Activated CD4-positive, alpha-beta T cell treated with anti-CD3 and anti-CD28 coated beads for 36 hours (primary cell): ENCODE measurements at regions of chr14 and their contacts with region 1.

Region 1: DNA sequence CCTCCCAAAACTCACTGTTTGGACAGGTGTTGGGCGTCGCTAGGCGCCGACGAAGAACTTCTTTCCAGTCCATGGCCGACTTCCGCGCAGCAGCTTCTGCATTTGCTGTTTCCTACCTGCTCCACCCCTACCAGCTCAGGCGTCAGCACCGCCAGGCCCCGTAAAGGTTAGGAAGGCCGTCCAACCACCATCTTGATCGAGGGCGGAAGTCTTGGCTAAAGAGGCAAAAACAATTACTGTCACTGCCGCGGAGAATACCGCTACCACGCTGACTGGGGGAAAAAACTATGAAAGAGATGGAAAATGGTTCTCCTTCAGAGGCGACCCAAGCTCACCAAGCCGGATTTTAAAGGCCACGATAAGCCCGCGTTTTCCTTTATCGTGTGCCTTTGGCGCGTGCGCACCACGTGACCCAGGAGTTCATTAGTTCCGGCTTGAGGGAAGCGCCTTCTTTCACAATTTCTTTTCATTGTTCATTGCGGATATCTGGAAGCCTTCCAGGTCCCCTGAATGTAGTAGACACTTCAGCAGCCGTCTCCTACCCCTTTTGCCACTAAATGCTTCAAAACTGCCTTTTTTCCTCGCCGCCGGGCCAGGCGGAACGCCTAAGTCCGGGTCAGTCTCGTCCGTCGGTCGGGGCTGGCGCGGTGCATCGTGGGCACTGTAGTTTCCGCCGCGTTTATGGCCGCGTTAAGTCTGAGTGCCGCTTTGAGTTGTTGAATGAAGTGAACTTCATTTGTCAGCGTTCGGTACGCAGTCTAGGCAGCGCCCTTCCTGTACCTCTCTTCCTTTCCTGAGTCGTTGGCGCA is at the starts of genes PPP2R3C and PRORP:
- DNase-seq: peak; percentile 93
- ATAC-seq: peak; percentile 87
- H3K4me3 Mint-ChIP-seq: peak within 1 kb of the TSS; percentile 87
- H3K27ac Mint-ChIP-seq: peak within 1 kb of the TSS; percentile 99
- H3K4me1 Mint-ChIP-seq: peaks cover 64% of the 10 kb centered on the region
- H3K27me3 Mint-ChIP-seq: no peaks in the 10 kb centered on the region
- total RNA-seq, gene PPP2R3C: 43.8 to 53.5 TPM
- total RNA-seq, gene PRORP: 37.3 to 51.1 TPM

Region 2: GRCh38 chr14:34539407-34540180 is 582.5 kb before region 1 on chr14 and contains the start of gene EAPP:
- CTCF ChIA-PET with region 1: no interaction called
- POLR2A ChIA-PET with region 1: no interaction called
- intact Hi-C with region 1: loop called in 1 of 2 experiments (anchors 5 kb)
- DNase-seq: peak; percentile 98
- ATAC-seq: peak; percentile 99
- H3K4me3 Mint-ChIP-seq: peak within 1 kb of the TSS; percentile 94
- H3K27ac Mint-ChIP-seq: peak within 1 kb of the TSS; percentile 95
- H3K4me1 Mint-ChIP-seq: peaks cover 33% of the 10 kb centered on the region
- H3K27me3 Mint-ChIP-seq: no peaks in the 10 kb centered on the region
- total RNA-seq, gene EAPP: 41.6 to 49.2 TPM

Region 3: DNA sequence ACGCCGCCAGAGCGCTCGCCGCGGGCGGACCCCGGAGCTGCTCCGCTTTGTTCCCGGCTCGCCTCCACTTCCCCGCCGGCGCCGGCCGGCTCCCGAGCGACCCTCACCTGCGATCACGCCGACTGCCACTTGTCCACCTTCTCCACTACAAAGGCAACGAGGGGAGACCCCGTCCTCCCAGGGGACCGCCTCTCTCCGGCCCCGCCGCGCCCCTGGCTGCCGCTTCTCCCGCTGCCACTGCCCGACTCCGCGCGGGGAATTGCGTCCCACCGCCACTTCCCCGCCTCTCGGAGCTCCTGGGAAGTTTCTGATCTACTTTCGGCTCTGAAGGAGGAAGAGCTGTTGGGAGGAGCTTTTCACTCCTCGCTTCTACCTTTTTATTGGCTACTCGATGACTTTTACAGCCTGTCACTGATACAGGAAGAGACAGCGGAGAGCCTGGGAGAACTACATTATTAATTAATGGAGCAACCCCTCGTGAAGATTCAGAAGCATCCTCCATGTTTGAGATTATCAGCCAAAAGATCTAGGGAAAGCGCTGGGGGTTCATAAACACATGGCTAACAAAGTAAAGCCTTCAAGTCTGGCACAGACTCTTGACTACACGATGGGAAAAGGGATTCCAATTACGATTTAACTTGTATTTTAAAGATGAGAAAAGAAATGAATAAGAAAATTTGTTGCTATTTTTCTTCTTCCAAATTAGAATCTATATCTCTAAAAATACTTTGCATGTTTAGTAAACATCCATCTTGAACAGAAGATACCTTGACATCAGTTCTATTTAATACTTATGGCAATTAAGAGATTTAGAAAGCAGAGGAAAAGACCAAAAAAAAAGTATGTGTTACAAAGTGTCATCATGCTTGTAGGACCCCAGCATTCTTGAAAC is 246.8 kb before region 1 on chr14 and contains the start of gene BAZ1A:
- CTCF ChIA-PET with region 1: no interaction called
- POLR2A ChIA-PET with region 1: no interaction called
- intact Hi-C with region 1: loop called (anchors 1 to 2 kb)
- DNase-seq: peak; percentile 50
- ATAC-seq: peak; percentile 9
- H3K4me3 Mint-ChIP-seq: peak within 1 kb of the TSS; percentile 99
- H3K27ac Mint-ChIP-seq: peak within 1 kb of the TSS; percentile 98
- H3K4me1 Mint-ChIP-seq: peaks cover 29% of the 10 kb centered on the region
- H3K27me3 Mint-ChIP-seq: no peaks in the 10 kb centered on the region
- total RNA-seq, gene BAZ1A: 53.9 to 75.2 TPM

Region 4: GRCh38 chr14:35140718-35141581 is 18.9 kb after region 1 on chr14:
- CTCF ChIA-PET with region 1: interaction called, 8 read pairs
- POLR2A ChIA-PET with region 1: interaction called, 12 read pairs
- intact Hi-C with region 1: no loop called
- DNase-seq: no peak
- ATAC-seq: no peak
- H3K4me3 Mint-ChIP-seq: no peak overlapping the region
- H3K27ac Mint-ChIP-seq: no peak overlapping the region
- H3K4me1 Mint-ChIP-seq: peaks cover 14% of the 10 kb centered on the region
- H3K27me3 Mint-ChIP-seq: no peaks in the 10 kb centered on the region

Region 5: GRCh38 chr14:35213143-35213788 is 91.2 kb after region 1 on chr14:
- CTCF ChIA-PET with region 1: no interaction called
- POLR2A ChIA-PET with region 1: no interaction called
- intact Hi-C with region 1: no loop called
- DNase-seq: no peak
- ATAC-seq: no peak
- H3K4me3 Mint-ChIP-seq: no peak overlapping the region
- H3K27ac Mint-ChIP-seq: no peak overlapping the region
- H3K4me1 Mint-ChIP-seq: peaks cover 12% of the 10 kb centered on the region
- H3K27me3 Mint-ChIP-seq: no peaks in the 10 kb centered on the region

Region 6: GRCh38 chr14:35404449-35405303 is 282.6 kb after region 1 on chr14 and contains the start of gene NFKBIA:
- CTCF ChIA-PET with region 1: no interaction called
- POLR2A ChIA-PET with region 1: interaction called, 23 read pairs
- intact Hi-C with region 1: loop called (anchors 1 kb)
- DNase-seq: peak; percentile 98
- ATAC-seq: peak; percentile 72
- H3K4me3 Mint-ChIP-seq: peak within 1 kb of the TSS; percentile 99
- H3K27ac Mint-ChIP-seq: peak within 1 kb of the TSS; percentile 98
- H3K4me1 Mint-ChIP-seq: peaks cover 34% of the 10 kb centered on the region
- H3K27me3 Mint-ChIP-seq: no peaks in the 10 kb centered on the region
- total RNA-seq, gene NFKBIA: 264 to 298 TPM